SK-N-SH (cell line): ENCODE measurements at regions of chr12 and their contacts with region 1.

Region 1: GRCh38 chr12:49967042-49967776 is 5.5 kb downstream of the AQP5 start:
- DNase-seq: peak; percentile 94
- H3K4me3 ChIP-seq: peak overlapping the region; percentile 47 to 64
- H3K27ac ChIP-seq: peak overlapping the region in 1 of 2 experiments; percentile 60; a peak in 1 of 4 replicates
- H3K4me1 ChIP-seq: peaks cover 10 to 25% of the 10 kb centered on the region in 2 experiments; a peak in 2 of 4 replicates
- H3K27me3 ChIP-seq: no peaks in the 10 kb centered on the region
- CTCF ChIP-seq: peak; percentile 74
- EP300 ChIP-seq: 0 out of 4 replicates have a peak, but pooled peaks of 1 of the 2 experiments have one; percentile 2
- RAD21 ChIP-seq: peak; percentile 94

Region 2: DNA sequence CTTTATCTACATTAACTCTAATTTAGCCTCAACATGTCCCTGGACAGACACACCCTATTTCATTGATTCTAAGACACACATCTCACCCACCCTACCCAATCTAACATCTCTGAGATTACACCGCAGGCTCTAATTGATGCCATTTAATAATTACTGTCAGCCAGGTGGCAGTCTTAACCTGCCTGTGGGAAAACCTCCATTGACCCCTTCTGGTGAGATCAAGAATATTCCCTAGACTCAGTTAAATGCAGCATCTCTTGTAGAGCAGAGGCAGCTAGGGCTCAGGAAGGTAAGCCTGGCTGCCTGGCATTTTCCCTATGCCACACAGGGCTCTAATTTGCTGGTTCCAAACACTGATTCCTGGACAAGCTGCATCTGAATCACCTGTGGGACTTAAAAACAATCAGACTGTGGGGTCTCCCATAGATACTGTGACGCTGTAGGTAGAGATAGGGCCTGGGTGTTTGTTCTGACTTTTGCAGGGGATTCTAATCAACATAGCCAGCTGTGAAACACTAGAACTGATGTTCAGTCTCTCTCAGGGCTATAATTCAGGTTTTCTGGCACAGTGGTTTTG is 413.6 kb before region 1 on chr12:
- CTCF ChIA-PET with region 1: no interaction called
- POLR2A ChIA-PET with region 1: no interaction called
- DNase-seq: peak; percentile 73
- H3K4me3 ChIP-seq: no peak overlapping the region
- H3K27ac ChIP-seq: no peak overlapping the region
- H3K4me1 ChIP-seq: no peaks in the 10 kb centered on the region; a peak in 1 of 4 replicates
- H3K27me3 ChIP-seq: no peaks in the 10 kb centered on the region
- CTCF ChIP-seq: peak; percentile 58
- EP300 ChIP-seq: no peak
- RAD21 ChIP-seq: peak; percentile 66

Region 3: GRCh38 chr12:49784756-49785409 is 182.3 kb before region 1 on chr12:
- CTCF ChIA-PET with region 1: no interaction called
- POLR2A ChIA-PET with region 1: no interaction called
- DNase-seq: no peak
- H3K4me3 ChIP-seq: no peak overlapping the region
- H3K27ac ChIP-seq: peak overlapping the region in 1 of 2 experiments; percentile 19; a peak in 1 of 4 replicates
- H3K4me1 ChIP-seq: no peaks in the 10 kb centered on the region; a peak in 1 of 4 replicates
- H3K27me3 ChIP-seq: no peaks in the 10 kb centered on the region
- CTCF ChIP-seq: no peak
- EP300 ChIP-seq: no peak
- RAD21 ChIP-seq: no peak

Region 4: DNA sequence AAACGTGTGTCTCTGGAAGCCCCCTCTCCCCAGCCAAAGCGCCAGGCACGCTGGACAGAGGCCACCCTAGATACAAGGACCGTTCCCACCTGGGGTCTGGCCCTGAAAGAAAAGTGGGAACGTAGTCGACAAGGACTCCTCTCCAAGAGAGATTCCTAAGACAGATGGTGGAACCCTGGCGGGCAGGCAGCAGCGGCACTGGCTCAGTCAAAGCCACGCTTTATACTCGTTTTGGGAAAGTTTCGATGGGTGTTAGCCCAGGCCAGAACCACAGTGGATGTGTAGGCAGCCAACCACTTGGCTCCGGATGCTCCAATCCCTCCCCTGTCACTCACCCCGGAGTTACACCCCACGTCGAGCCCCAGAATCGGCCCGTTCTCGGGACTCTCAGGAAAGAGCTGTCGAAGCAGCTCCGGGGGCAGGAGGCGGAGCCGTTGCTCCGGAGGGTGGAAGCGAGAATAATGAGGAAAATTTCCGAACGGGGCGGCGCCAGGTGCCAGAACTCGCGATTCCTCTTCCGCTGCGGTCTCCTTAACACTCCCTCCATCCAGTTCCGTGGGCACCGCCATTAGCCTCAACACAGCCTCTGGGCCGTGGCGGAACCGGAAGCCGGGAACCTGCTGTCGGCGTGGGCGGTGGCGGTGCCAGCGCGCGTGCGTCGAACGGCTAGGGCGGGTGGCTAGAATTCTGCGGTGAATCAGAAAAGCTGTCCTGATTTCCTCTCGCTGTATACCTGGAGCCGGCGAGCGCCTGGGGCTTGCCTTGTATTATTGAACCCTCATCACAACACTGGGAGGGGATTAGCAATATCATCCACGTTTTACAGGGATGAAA is 124.5 kb before region 1 on chr12 and contains the start of gene BCDIN3D:
- CTCF ChIA-PET with region 1: interaction called, 30 read pairs
- POLR2A ChIA-PET with region 1: no interaction called
- DNase-seq: peak; percentile 92
- H3K4me3 ChIP-seq: peak within 1 kb of the TSS; percentile 62 to 86
- H3K27ac ChIP-seq: peak within 1 kb of the TSS; percentile 92 to 94
- H3K4me1 ChIP-seq: peaks cover 11 to 18% of the 10 kb centered on the region in 2 experiments; a peak in 3 of 4 replicates
- H3K27me3 ChIP-seq: no peaks in the 10 kb centered on the region; the same call in 1 of the 2 replicates
- CTCF ChIP-seq: no peak
- EP300 ChIP-seq: no peak
- RAD21 ChIP-seq: no peak
- polyA plus RNA-seq, gene BCDIN3D: 2.3 and 3.8 TPM in 2 replicates

Region 5: DNA sequence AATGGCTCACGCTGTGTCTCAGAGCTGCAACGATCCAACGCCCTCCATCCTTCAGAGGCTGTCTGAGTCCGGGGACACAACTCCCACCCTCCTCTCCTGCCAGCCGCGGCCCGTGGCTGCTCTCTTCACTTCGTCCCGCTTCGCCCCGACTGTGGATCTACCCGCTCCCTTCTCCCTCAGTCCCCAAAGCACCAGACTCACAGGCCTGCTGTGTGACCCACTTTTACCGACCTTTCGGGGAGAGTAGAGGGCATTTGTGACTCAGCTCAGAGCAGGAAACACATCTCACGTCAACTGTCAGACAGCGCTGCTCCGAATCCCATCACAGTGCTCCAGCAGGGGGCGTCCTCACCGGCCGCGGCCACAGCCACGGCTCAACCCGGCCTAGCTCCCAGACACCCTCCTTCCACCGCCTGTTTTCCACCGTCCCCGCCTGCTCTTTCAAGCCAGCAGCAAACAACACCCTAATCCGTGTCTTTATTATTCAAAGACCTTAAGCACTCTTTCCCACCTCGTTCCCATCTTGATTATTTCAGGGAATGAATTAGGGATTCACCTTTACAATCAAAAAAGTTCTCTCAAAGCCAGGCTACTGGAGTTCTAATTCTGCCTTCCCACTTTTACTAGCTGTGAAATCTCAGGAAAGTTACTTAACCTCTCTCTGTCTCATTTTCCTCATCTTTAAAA is 21.7 kb before region 1 on chr12:
- CTCF ChIA-PET with region 1: interaction called, 56 read pairs
- POLR2A ChIA-PET with region 1: no interaction called
- DNase-seq: peak; percentile 91
- H3K4me3 ChIP-seq: peak overlapping the region; percentile 33 to 36; a peak in 3 of 4 replicates
- H3K27ac ChIP-seq: peak overlapping the region in 1 of 2 experiments; percentile 29; a peak in 1 of 4 replicates
- H3K4me1 ChIP-seq: peaks cover 0 to 17% of the 10 kb centered on the region in 2 experiments; a peak in 1 of 4 replicates
- H3K27me3 ChIP-seq: no peaks in the 10 kb centered on the region
- CTCF ChIP-seq: peak; percentile 96
- EP300 ChIP-seq: no peak; a peak in 1 of 4 replicates
- RAD21 ChIP-seq: peak; percentile 63

Region 6: DNA sequence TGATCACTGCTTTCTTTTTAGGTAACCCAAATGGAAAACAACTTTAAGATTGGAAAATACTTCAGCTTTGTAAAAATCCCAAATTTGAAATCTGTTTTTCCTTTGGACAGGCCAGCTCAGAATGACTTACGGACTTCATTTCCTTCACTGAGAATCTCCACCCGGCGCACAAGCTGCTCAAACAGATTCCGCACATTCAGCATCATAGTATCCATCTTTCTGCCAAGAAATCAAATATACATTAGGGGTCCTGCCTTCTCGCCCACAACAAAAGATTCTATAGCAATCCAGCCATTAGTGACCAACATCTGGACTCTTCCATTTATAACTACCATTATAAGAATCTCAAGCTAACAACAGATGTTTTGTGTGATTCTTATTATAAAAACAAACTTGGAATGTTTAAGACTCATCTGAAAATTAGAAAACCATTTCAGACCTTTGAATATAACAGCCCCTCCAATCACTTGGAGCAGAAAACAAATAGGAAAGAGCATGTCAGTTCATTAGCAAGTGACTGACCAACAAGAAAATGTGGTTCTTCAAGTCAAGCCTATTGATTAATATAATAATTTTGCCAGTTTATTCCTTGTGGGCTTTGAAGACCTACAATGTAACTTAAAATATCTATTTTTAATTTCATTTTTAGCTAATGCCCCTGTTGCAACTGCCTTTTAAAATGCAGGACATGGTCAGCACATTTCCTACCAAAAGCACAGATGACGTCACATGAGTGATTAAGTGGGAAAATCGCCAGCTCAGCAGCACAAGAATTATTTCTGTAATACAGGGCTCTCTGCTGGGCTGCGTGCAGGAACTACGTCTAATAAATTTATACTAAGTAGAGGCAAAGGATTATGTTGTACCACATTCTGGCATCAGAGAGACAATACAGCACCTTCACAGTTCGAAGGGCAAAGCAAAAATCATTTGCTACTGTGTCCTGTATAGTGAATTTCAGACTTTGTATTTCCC is 49.6 kb after region 1 on chr12:
- CTCF ChIA-PET with region 1: interaction called, 21 read pairs
- POLR2A ChIA-PET with region 1: no interaction called
- DNase-seq: no peak
- H3K4me3 ChIP-seq: no peak overlapping the region
- H3K27ac ChIP-seq: peak overlapping the region; percentile 55 to 58
- H3K4me1 ChIP-seq: peaks cover 3 to 7% of the 10 kb centered on the region in 2 experiments; a peak in 3 of 4 replicates
- H3K27me3 ChIP-seq: no peaks in the 10 kb centered on the region
- CTCF ChIP-seq: no peak
- EP300 ChIP-seq: no peak
- RAD21 ChIP-seq: peak; percentile 26; the same call in 1 of the 2 replicates

Region 7: DNA sequence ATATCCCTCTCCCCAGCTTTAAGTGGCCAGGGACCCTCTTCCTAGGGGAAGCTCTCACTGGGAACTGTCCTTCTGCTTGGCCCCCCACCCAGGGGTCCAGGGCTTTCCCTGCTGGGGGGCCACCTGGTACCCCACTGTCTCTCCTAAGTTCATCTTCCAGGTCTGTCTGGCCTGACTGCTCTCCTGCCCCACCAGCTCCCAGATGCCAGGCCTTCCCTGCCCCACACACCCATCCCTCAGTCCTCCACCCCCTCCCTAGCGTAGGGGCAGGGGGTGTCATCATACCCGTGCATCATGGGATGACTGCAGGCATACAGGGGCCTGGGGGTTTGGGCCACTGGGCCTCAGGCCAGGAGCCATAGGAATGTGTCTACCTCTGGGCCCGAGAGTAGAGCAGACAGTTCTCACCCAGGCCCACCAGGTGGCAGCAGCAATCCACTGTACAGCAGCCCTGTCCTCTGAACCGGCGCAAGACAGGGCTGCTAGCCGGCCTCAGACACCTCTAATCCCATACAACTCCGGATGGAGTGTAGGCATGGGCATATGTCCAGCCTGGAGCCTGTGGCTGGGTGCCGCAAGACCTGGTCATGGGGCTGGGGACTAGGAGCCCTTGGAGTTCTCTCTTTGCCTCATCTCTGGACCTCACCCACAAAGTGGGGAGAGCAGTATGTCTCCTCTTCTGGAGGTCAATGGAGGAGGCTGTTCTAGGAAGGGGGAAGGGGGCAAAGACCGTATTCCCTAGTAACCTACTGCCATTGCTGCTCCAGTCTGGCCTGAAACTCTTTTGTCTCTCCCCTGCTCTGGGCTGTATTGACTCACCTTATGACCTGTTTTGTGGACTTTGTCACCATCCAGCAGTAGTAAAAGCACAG is 108.0 kb after region 1 on chr12:
- CTCF ChIA-PET with region 1: interaction called, 1,401 read pairs
- POLR2A ChIA-PET with region 1: no interaction called
- DNase-seq: peak; percentile 92
- H3K4me3 ChIP-seq: no peak overlapping the region; a peak in 1 of 4 replicates
- H3K27ac ChIP-seq: no peak overlapping the region; a peak in 1 of 4 replicates
- H3K4me1 ChIP-seq: peaks cover 0 to 9% of the 10 kb centered on the region in 2 experiments; a peak in 1 of 4 replicates
- H3K27me3 ChIP-seq: no peaks in the 10 kb centered on the region
- CTCF ChIP-seq: peak; percentile 86
- EP300 ChIP-seq: no peak
- RAD21 ChIP-seq: peak; percentile 92

Region 8: DNA sequence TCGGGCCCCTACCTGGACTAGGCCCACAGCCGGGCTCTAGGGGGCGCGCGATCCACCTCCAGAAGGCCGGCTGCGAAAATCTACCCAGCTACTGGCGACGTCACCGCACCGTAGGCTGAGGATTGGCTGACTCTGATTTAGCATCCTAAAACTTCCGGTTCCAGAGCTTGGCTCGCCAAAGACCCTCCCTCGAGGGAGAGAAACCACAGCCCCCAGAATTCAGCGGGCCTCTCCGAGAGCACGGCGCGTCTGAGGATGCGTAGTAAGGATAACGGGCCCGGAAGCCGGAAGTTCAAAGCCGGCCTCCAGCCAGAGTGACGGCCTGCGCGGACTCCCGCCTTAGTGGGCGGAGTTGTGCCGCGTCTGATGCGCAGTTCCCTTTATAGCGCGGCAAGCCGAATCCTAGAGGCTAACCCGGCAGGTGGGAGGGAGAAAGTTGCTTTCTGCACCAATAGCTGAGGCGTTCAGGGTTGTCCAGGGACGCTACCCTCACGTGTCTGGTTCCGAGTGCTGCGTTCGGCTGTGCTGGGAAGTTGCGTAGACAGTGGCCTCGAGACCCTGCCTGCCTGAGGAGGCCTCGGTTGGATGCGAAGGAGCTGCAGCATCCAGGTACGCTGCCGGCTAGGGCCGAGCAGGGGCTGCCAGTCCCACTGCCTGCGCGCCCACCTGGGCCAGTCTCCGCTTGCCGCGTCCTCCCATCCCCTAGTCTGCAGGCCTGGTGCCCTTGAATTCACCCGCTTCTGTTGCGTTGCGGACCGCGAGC is 144.7 kb after region 1 on chr12 and contains the start of gene COX14:
- CTCF ChIA-PET with region 1: interaction called, 19 read pairs
- POLR2A ChIA-PET with region 1: no interaction called
- DNase-seq: peak; percentile 96
- H3K4me3 ChIP-seq: peak within 1 kb of the TSS; percentile 67 to 99
- H3K27ac ChIP-seq: peak within 1 kb of the TSS; percentile 69 to 95
- H3K4me1 ChIP-seq: peaks cover 12 to 18% of the 10 kb centered on the region in 2 experiments; a peak in 2 of 4 replicates
- H3K27me3 ChIP-seq: no peaks in the 10 kb centered on the region
- CTCF ChIP-seq: peak; percentile 98
- EP300 ChIP-seq: no peak
- RAD21 ChIP-seq: peak; percentile 49
- polyA plus RNA-seq, gene COX14: 204 and 218 TPM in 2 replicates

Region 9: GRCh38 chr12:50257686-50258551 is 290.7 kb after region 1 on chr12:
- CTCF ChIA-PET with region 1: no interaction called
- POLR2A ChIA-PET with region 1: no interaction called
- DNase-seq: no peak
- H3K4me3 ChIP-seq: no peak overlapping the region
- H3K27ac ChIP-seq: peak overlapping the region in 1 of 2 experiments; percentile 51; a peak in 2 of 4 replicates
- H3K4me1 ChIP-seq: peaks cover 0 to 26% of the 10 kb centered on the region in 2 experiments; a peak in 2 of 4 replicates
- H3K27me3 ChIP-seq: no peaks in the 10 kb centered on the region
- CTCF ChIP-seq: no peak
- EP300 ChIP-seq: no peak
- RAD21 ChIP-seq: no peak

Region 10: DNA sequence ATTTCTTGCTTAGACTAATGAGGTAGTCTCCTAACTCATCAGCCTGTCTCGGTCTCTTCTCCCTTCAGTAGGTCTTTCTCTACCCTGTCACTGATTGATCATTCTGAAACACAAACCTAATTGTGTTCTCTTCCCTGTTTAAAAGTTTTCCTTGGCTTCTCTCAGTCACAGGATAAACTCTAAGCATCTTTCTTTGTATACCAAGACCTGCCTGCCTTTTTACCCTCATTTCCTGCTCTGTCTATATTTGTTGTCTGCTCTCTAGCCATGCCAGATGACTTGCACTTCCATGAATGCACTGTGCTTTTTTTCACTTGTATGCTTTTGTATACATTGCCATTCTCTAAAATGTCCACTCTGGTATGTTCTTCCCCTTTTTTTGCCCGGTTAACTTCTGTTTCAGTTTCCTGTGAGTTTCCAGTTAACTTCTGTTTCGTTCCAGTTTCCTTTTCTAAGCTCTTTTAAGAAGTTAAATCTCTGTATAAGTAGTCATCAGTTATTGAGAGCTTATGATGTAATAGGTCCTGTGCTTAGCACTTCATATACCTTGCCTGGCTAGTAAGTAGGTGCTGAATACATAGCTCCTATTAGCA is 550.3 kb after region 1 on chr12:
- CTCF ChIA-PET with region 1: no interaction called
- POLR2A ChIA-PET with region 1: no interaction called
- DNase-seq: no peak
- H3K4me3 ChIP-seq: 0 out of 4 replicates have a peak overlapping the region, but pooled peaks of 1 of the 2 experiments have one; percentile 5
- H3K27ac ChIP-seq: peak overlapping the region in 1 of 2 experiments; percentile 71; a peak in 2 of 4 replicates
- H3K4me1 ChIP-seq: peaks cover 0 to 15% of the 10 kb centered on the region in 2 experiments; a peak in 1 of 4 replicates
- H3K27me3 ChIP-seq: no peaks in the 10 kb centered on the region
- CTCF ChIP-seq: no peak
- EP300 ChIP-seq: no peak
- RAD21 ChIP-seq: no peak